Endothelial cell of umbilical vein (primary cell): ENCODE measurements at regions of chr2 and their contacts with region 1.

Region 1: GRCh38 chr2:33583194-33583938 is 15.7 kb downstream of the FAM98A start:
- DNase-seq: peak; percentile 64
- H3K4me3 ChIP-seq: no peak overlapping the region
- H3K27ac ChIP-seq: no peak overlapping the region
- H3K4me1 ChIP-seq: peaks cover 3% of the 10 kb centered on the region
- H3K27me3 ChIP-seq: no peaks in the 10 kb centered on the region
- CTCF ChIP-seq: peak; percentile 63 to 66
- POLR2A ChIP-seq: no peak

Region 2: DNA sequence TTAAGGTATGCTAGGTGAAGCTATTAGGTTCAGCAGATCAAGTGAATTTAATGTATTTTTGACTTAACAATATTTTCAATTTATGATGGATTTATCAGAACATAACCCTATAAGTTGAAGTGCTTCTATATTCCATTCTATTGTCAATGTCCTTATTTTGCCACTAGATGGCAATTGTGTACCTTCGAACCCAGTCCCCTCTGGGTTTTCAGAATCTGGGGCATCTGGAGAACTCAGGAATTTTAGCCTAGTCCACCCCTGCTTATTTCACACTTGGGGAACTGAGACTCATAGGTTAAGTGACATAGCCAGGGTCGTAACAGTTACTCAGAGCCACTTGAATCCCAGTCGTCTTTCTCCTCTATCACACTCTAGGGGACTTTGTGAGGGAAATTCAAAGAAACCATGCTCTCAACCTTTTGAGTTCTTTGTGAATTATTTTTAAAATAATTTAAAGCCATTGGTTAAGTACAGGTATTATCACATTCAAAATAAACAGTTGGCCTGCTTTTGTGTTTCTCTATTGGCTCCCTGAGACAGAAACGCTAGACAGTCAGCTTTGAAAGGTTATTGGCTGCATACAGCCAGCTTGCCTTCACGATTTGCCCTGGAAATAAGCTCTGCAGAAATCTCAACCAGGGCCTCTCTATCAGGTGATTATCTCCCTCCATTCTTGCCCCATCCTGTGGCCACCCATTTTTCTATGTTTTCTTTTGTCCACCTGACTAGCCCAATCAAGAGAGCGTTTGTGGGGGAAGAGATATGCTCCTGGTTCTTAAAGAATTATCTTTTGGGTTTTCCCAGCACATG is 810.5 kb before region 1 on chr2:
- CTCF ChIA-PET with region 1: interaction called, 12 read pairs
- POLR2A ChIA-PET with region 1: no interaction called
- dilution Hi-C with region 1: no loop called
- intact Hi-C with region 1: loop called (anchors 1 kb)
- DNase-seq: peak; percentile 75
- H3K4me3 ChIP-seq: no peak overlapping the region
- H3K27ac ChIP-seq: no peak overlapping the region
- H3K4me1 ChIP-seq: peaks cover 3% of the 10 kb centered on the region
- H3K27me3 ChIP-seq: no peaks in the 10 kb centered on the region
- CTCF ChIP-seq: peak; percentile 38 to 53
- POLR2A ChIP-seq: no peak

Region 3: DNA sequence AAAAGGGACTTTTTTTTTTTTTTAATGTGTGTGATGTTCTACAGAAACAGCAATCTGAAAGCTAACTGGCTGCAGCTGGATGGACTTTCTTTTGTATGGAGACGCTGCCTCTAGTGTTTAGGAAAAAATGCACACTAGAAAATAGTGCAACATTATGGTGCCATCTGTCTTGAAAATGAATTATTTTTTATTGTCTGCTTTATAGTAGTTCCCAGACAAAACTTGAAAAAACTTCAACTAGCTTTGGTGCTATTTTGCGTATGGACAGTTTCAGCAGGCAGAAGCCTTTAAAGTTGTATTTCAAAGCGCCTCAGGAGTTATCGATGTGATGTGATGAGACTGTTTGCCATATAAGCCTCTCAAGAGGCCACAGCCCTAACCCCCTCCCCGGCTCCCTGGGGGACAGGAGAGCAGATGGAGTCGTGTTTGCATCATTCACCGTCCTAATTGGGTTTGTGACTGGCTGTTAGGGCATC is 549.7 kb before region 1 on chr2:
- CTCF ChIA-PET with region 1: interaction called, 14 read pairs
- POLR2A ChIA-PET with region 1: no interaction called
- dilution Hi-C with region 1: no loop called
- intact Hi-C with region 1: loop called (anchors 10 kb)
- DNase-seq: peak; percentile 67
- H3K4me3 ChIP-seq: no peak overlapping the region
- H3K27ac ChIP-seq: no peak overlapping the region
- H3K4me1 ChIP-seq: peaks cover 15% of the 10 kb centered on the region
- H3K27me3 ChIP-seq: no peaks in the 10 kb centered on the region
- CTCF ChIP-seq: peak; percentile 13 to 46
- POLR2A ChIP-seq: no peak

Region 4: GRCh38 chr2:33395655-33396249 is 187.6 kb before region 1 on chr2:
- CTCF ChIA-PET with region 1: interaction called, 14 read pairs
- POLR2A ChIA-PET with region 1: no interaction called
- dilution Hi-C with region 1: no loop called
- intact Hi-C with region 1: no loop called
- DNase-seq: peak; percentile 76
- H3K4me3 ChIP-seq: no peak overlapping the region
- H3K27ac ChIP-seq: no peak overlapping the region
- H3K4me1 ChIP-seq: no peaks in the 10 kb centered on the region
- H3K27me3 ChIP-seq: no peaks in the 10 kb centered on the region
- CTCF ChIP-seq: peak; percentile 56 to 58
- POLR2A ChIP-seq: no peak

Region 5: GRCh38 chr2:33419581-33420200 is 163.7 kb before region 1 on chr2:
- CTCF ChIA-PET with region 1: interaction called, 93 read pairs
- POLR2A ChIA-PET with region 1: no interaction called
- dilution Hi-C with region 1: no loop called
- intact Hi-C with region 1: loop called (anchors 1 kb)
- DNase-seq: no peak
- H3K4me3 ChIP-seq: no peak overlapping the region
- H3K27ac ChIP-seq: peak overlapping the region; percentile 23
- H3K4me1 ChIP-seq: peaks cover 31% of the 10 kb centered on the region
- H3K27me3 ChIP-seq: no peaks in the 10 kb centered on the region
- CTCF ChIP-seq: no peak
- POLR2A ChIP-seq: no peak

Region 6: DNA sequence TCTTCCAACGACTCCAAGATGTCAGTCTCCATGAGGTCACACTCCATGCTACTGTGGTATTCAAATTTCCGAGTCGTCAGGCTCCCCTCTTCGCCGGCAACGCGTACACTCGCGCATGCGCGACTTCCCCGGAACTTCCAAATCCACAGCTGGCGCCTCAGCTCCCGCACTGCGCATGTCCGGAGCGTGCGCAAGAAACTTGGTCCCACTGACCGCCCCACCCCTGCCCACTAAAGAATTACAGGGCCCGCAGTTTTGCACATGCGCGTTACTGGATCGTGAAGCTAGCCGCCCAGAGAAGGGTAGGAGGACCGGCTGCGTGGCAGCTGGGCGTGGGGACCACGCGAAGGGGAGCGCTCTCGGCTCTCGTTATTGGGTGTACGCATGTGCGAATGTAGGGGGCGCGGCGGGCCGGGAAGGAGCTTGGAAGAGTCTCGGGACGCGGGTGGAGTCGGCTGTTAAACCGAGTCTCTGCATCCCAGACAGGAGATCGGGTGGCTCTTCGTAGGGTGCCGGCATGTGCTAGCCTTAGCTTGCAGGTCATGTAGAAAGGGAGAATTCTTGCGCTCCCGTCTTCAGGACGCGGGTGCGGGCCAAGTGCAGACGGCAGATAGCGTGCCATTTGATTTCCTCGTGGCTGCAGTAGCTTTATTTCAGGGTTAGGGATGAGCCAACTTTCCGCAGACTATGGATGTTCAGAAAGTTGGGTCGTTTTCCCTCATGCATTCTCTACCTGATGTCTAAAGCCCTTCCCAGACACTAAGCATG is 16.0 kb after region 1 on chr2 and contains the start of gene FAM98A:
- CTCF ChIA-PET with region 1: interaction called, 12 read pairs
- POLR2A ChIA-PET with region 1: no interaction called
- dilution Hi-C with region 1: no loop called
- intact Hi-C with region 1: no loop called
- DNase-seq: peak; percentile 100
- H3K4me3 ChIP-seq: peak within 1 kb of the TSS; percentile 71 to 81 (median 75)
- H3K27ac ChIP-seq: peak within 1 kb of the TSS; percentile 67
- H3K4me1 ChIP-seq: peaks cover 19% of the 10 kb centered on the region
- H3K27me3 ChIP-seq: peaks cover 0 to 4% of the 10 kb centered on the region in 2 experiments
- CTCF ChIP-seq: peak in 1 of 2 donors; percentile 6
- POLR2A ChIP-seq: peak; percentile 58
- total RNA-seq, gene FAM98A: 85.9 and 97.1 TPM in 2 replicates